Activated T-helper 2 cell treated with anti-CD3 and anti-CD28 coated beads, Interferon-gamma antibody, Interleukin-2, Interleukin-4, amounts not matched to agents 10 μg/mL and 5 μg/mL and 100 μg/mL, durations not matched to agents 14 hours and 24 hours and 36 hours (primary cell): ENCODE measurements at regions of chr19 and their contacts with region 1.

Region 1: DNA sequence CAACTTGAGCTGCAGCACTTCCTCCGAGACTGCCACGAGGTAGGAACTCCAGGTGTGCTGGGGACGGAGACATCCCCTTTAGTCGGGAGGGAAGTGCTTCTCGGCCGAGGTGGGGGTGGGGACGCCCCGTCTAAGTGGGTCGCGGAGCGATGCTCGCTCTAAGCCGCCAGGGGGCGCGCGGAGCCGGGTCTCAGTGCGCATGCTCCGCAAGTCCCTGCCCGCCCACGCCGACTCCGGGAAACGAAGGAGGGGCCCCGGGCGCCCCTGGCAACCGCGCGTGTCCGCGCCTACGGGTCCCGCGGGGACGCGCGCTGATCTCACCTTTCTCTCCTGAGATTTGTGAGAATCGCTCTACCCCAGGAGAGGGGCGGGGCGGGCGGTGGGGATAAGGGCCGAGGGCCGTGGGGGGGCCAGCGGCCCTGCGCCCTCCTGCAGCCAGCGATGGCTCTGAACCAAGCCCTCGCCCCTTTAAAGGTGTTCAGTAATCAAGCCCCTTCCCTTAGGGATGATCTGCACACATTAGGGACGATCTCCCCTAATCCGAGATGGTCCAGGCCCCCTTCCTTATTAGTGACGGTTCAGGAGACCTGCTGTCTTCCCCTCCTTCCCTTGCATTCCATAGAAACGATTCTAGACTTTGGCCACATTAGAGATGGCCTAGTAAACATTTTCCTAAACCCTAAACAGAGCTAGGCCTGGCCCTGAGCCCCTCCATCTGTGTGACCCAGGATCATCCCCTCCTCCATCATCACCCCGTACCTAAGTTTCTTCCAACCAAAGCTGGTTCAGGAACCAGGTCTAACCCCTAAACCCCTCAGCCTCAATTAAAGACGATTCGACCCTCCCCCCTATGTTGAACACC is 47.3 kb upstream of the SHKBP1 start:
- DNase-seq: peak; percentile 85
- H3K4me3 Mint-ChIP-seq: peak overlapping the region; percentile 61
- H3K27ac Mint-ChIP-seq: no peak overlapping the region
- H3K4me1 Mint-ChIP-seq: peaks cover 6% of the 10 kb centered on the region
- H3K27me3 Mint-ChIP-seq: peaks cover 23% of the 10 kb centered on the region

Region 2: GRCh38 chr19:40305403-40305802 is 223.9 kb before region 1 on chr19:
- intact Hi-C with region 1: loop called (anchors 10 kb)
- DNase-seq: peak; percentile 59
- H3K4me3 Mint-ChIP-seq: no peak overlapping the region
- H3K27ac Mint-ChIP-seq: no peak overlapping the region
- H3K4me1 Mint-ChIP-seq: peaks cover 3% of the 10 kb centered on the region
- H3K27me3 Mint-ChIP-seq: no peaks in the 10 kb centered on the region

Region 3: DNA sequence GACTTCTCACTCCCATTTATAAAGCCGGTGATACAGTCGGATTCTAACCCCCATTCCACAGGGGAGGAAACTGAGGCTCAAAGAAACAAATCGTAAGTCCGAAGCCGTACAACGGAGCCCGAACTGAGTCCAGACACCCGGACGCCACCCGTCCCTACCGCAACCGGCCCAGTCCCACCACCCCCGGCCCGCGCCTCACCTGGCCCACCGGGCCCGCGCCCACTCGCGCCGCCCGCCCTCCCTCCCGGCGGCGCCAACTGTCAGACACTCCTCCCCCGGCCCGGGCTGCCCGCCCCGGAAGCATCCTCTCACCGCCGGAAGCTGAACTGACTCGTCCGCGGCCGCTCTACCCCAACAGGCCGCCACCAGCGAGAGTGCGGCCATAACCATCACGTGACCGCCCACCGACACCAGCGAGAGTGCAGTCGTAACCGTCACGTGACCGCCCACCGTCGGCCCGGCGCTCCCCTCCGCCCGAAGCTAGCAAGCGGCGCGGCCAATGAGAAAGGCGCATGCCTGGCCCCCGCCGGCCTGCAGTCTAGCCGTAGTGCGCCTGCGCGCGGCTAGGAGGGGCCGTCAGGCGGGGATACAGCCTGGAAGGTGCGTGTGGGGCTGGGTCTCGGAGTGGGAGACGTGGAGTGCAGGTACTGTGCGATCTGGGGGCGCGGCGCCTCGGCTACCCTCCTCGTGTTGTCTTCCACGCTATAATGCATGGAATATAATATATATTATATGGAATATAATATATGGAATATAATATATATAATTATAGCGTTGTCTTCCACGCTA is 181.0 kb before region 1 on chr19 and contains the starts of genes C19orf47 and PLD3:
- intact Hi-C with region 1: loop called (anchors 1 kb)
- DNase-seq: peak; percentile 99
- H3K4me3 Mint-ChIP-seq: peak within 1 kb of the TSS; percentile 99
- H3K27ac Mint-ChIP-seq: peak within 1 kb of the TSS; percentile 90
- H3K4me1 Mint-ChIP-seq: peaks cover 16% of the 10 kb centered on the region
- H3K27me3 Mint-ChIP-seq: no peaks in the 10 kb centered on the region
- total RNA-seq, gene C19orf47: 22.4 and 25.1 TPM in 2 replicates
- total RNA-seq, gene PLD3: 59.2 and 60.1 TPM in 2 replicates

Region 4: DNA sequence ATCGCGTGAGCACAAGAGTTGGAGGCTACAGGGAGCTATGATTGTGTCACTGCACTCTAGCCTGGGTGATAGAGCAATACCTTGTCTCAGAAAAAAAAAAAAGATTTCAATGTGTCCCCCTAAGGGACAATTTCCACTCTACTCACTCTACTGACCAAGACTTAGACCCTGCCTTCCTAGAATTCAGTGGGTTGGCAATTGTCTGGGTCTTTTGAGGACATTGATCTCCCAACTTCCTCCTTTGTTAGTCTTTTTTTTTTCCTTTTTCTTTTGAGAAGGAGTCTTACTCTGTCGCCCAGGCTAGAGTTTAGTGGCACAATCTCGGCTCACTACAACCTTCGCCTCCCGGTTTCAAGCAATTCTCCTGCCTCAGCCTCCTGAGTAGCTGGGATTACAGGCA is 60.3 kb before region 1 on chr19:
- intact Hi-C with region 1: no loop called
- DNase-seq: no peak
- H3K4me3 Mint-ChIP-seq: no peak overlapping the region
- H3K27ac Mint-ChIP-seq: no peak overlapping the region
- H3K4me1 Mint-ChIP-seq: peaks cover 18% of the 10 kb centered on the region
- H3K27me3 Mint-ChIP-seq: peaks cover 24% of the 10 kb centered on the region

Region 5: GRCh38 chr19:40486017-40486416 is 43.3 kb before region 1 on chr19:
- intact Hi-C with region 1: no loop called
- DNase-seq: no peak
- H3K4me3 Mint-ChIP-seq: no peak overlapping the region
- H3K27ac Mint-ChIP-seq: no peak overlapping the region
- H3K4me1 Mint-ChIP-seq: peaks cover 9% of the 10 kb centered on the region
- H3K27me3 Mint-ChIP-seq: peaks cover 3% of the 10 kb centered on the region